H1 (cell line): ENCODE measurements at regions of chr12 and their contacts with region 1.

Region 1: GRCh38 chr12:128969480-128970055 is 116.3 kb downstream of the GLT1D1 start:
- DNase-seq: peak; percentile 50 to 82
- H3K4me3 ChIP-seq: peak overlapping the region in 3 of 4 experiments; percentile 28 to 53 (median 40); a peak in 5 of 8 replicates
- H3K27ac ChIP-seq: no peak overlapping the region
- H3K4me1 ChIP-seq: peaks cover 4 to 41% (median 19%) of the 10 kb centered on the region in 4 experiments
- H3K27me3 ChIP-seq: peaks cover 0 to 17% (median 10%) of the 10 kb centered on the region in 4 experiments; a peak in 6 of 7 replicates
- CTCF ChIP-seq: peak; percentile 89 to 96 (median 96)
- EP300 ChIP-seq: no peak
- POLR2A ChIP-seq: no peak
- RAD21 ChIP-seq: peak; percentile 95 to 97

Region 2: DNA sequence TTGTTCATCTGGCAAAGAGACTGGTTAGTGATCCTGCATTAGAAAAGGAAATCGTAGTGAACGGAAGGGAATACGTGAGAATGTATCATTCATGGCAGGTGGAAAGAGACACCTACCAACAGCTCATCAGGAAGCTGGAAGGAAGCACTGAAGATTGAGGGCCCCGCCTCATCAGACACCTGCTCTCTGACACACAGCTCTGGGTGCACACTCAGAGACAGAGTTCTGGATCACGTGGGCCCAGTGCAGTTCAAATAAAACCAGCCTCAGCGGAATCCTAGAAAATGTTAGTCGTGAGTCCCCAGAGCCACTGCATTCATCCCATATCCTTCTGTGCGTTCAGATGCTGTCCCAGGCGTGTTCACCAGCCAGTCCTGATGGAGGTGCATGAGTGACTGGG is 13.4 kb after region 1 on chr12:
- CTCF ChIA-PET with region 1: interaction called, 20 read pairs
- POLR2A ChIA-PET with region 1: interaction called, 9 read pairs
- DNase-seq: no peak
- H3K4me3 ChIP-seq: no peak overlapping the region
- H3K27ac ChIP-seq: no peak overlapping the region
- H3K4me1 ChIP-seq: peaks cover 0 to 22% (median 9%) of the 10 kb centered on the region in 4 experiments; a peak in 5 of 7 replicates
- H3K27me3 ChIP-seq: no peaks in the 10 kb centered on the region
- CTCF ChIP-seq: no peak
- EP300 ChIP-seq: no peak
- POLR2A ChIP-seq: no peak
- RAD21 ChIP-seq: no peak

Region 3: DNA sequence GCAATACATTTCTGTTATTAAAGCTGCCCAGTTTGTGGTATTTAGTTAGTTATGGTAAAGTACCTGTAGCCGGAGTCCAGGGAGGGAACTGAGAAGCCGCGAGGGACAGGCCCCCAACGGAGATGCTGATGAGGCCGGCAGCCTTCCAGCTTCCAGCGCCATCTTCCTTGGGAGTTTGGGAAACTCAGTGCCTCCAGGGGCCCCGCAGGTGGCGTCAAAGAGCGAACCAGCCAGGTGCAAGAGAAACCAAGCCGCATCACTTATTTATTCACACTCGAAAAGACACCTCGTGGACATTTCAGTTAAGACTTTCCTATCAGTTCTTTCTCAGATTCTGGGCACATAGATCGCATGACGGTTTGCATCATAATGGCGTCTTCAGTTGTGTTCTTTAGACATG is 100.3 kb after region 1 on chr12:
- CTCF ChIA-PET with region 1: interaction called, 13 read pairs
- POLR2A ChIA-PET with region 1: no interaction called
- DNase-seq: peak in 1 of 2 experiments; percentile 79
- H3K4me3 ChIP-seq: no peak overlapping the region
- H3K27ac ChIP-seq: no peak overlapping the region
- H3K4me1 ChIP-seq: peaks cover 0 to 3% (median 2%) of the 10 kb centered on the region in 4 experiments; a peak in 2 of 7 replicates
- H3K27me3 ChIP-seq: no peaks in the 10 kb centered on the region; a peak in 2 of 7 replicates
- CTCF ChIP-seq: peak; percentile 54 to 87 (median 66)
- EP300 ChIP-seq: no peak
- POLR2A ChIP-seq: no peak
- RAD21 ChIP-seq: peak; percentile 69 to 73

Region 4: DNA sequence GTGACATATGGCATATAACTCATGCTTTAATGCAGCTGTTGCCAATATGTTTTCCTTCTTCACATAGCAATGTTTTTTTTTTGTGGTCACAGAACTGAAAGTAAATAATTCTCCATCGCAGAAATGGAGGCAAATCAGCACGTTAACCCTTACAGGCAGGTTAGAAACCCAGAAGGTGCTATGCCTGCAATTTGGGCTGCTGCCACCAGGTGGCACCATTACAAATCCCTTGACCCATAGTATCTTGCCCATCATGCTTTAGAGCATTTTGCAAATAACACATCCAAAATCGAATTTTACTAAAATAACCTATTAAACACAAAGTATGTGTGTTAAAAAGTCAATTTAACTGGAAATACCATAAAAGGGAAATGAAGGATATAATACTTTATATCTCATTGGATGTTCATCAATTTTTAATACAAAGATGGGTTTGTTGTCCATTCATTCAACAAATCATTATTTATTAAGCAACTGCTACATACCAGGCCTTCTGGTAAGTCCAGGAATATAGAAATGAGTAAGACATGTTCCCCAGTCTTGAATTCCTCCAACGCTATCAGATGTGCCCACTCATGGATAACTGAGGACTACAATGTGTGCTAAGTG is 223.8 kb after region 1 on chr12:
- CTCF ChIA-PET with region 1: interaction called, 18 read pairs
- POLR2A ChIA-PET with region 1: no interaction called
- DNase-seq: peak; percentile 44 to 85
- H3K4me3 ChIP-seq: no peak overlapping the region
- H3K27ac ChIP-seq: no peak overlapping the region
- H3K4me1 ChIP-seq: no peaks in the 10 kb centered on the region
- H3K27me3 ChIP-seq: no peaks in the 10 kb centered on the region
- CTCF ChIP-seq: peak; percentile 54 to 82 (median 73)
- EP300 ChIP-seq: no peak
- POLR2A ChIP-seq: no peak
- RAD21 ChIP-seq: peak; percentile 73 to 74

Region 5: DNA sequence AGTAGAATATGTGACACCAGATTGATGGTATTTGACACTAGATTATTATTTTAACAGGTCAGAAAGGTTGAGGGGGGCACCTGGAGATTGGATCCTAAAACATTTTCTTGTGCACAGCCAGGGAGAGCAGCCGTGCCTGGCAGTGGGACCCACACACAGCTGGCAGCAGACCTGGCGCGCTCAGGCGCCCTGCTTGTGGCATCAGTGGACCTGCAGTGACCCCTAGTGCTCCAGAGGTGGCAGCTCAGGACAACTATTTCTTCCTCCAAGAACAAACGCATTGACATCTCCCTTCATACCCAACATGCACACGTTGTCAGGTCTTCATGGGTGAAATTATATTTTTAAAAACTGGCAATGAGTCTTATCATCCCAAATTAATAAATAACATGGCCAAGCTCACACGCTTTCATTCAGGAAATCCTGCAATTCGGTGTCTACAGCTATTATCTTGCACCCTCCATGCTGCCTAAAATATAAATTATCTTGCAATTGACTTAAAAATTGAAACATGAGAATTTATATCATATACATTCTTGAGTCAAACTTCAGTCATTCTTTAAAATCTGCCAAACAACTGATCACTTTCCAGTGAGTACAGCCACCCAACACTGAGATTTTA is 942.0 kb after region 1 on chr12:
- CTCF ChIA-PET with region 1: interaction called, 20 read pairs
- POLR2A ChIA-PET with region 1: no interaction called
- DNase-seq: peak in 1 of 2 experiments; percentile 77
- H3K4me3 ChIP-seq: no peak overlapping the region
- H3K27ac ChIP-seq: no peak overlapping the region
- H3K4me1 ChIP-seq: 0 out of 7 replicates have a peak, but pooled peaks cover 0 to 3% (median 0%) of the 10 kb centered on the region in 4 experiments
- H3K27me3 ChIP-seq: peaks cover 0 to 6% (median 6%) of the 10 kb centered on the region in 4 experiments; a peak in 5 of 7 replicates
- CTCF ChIP-seq: peak; percentile 92 to 94 (median 92)
- EP300 ChIP-seq: no peak
- POLR2A ChIP-seq: no peak
- RAD21 ChIP-seq: peak; percentile 100